ENCODE measurements at regions of chr15 and their contacts with region 1.

Region 1: DNA sequence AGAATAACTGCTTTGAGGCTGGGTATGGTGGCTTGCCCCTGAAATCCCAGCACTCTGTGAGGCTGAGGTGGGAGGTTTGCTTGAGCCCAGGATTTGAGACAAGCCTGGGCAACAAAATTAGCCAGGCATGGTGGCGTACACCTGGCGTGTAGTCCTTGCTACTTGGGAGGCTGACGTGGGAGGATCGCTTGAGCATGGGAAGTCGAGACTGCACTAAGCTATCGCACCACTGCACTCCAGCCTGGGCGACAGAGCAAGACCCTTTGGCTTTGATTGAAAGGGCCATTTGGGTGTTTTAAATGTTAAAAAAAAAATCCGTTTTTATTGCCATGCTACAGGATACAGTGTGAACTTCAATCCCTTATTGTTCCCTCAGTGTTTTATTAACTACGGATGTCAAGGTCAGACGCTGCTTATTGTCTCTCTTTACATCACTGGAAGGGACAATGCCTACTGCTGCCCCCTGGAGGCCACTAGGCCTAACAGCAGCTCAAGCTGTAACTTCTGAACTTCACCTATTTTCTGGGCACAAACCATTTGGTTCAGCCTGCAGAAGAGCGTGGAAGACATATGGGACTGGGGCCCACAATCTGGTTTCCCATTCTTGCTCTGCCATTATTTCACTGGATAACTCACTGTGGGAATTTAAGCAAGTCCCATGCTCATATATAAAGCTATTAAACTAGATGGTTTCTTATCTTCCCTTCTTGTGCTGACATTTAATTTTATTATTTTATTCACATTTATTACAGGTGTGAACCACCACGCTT is 15.3 kb upstream of the IREB2 start:
- DNase-seq: peak; percentile 45
- ATAC-seq: peak; percentile 98
- H3K4me3 ChIP-seq: no peak overlapping the region
- H3K27ac ChIP-seq: no peak overlapping the region
- H3K4me1 ChIP-seq: no peaks in the 10 kb centered on the region
- H3K27me3 ChIP-seq: peaks cover 20% of the 10 kb centered on the region
- CTCF ChIP-seq: peak; percentile 83
- POLR2A ChIP-seq: no peak
- RAD21 ChIP-seq: peak; percentile 67

Region 2: DNA sequence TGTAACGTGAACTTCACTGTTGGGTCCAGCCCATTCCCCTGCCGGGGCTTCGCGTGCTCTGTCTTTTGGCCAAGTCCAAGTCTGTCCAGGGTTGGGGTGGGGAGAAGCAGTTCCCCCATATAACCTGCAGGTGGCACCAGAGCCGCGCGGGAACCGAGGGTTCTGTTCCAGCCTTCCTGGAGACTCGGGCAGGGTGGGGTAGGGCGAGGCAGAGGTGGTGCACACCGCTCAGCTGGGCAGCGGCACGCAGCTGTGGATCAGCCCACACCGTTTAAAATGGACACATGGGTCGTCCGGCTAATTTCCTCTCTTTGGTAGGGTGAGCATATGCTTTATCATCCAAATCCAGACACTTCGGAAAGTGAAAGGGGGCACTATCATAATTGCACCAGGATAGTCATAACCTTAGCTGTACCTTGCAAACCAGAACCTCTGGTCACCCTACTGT is 463.3 kb before region 1 on chr15:
- CTCF ChIA-PET with region 1: no interaction called
- POLR2A ChIA-PET with region 1: no interaction called
- dilution Hi-C with region 1: no loop called
- in situ Hi-C with region 1: loop called (anchors 25 kb)
- intact Hi-C with region 1: loop called (anchors 5 kb)
- DNase-seq: peak; percentile 41
- ATAC-seq: peak; percentile 100
- H3K4me3 ChIP-seq: no peak overlapping the region
- H3K27ac ChIP-seq: no peak overlapping the region
- H3K4me1 ChIP-seq: no peaks in the 10 kb centered on the region
- H3K27me3 ChIP-seq: peaks cover 46% of the 10 kb centered on the region
- CTCF ChIP-seq: peak; percentile 90
- POLR2A ChIP-seq: no peak
- RAD21 ChIP-seq: peak; percentile 92

Region 3: GRCh38 chr15:78481917-78482316 is 59.2 kb after region 1 on chr15:
- CTCF ChIA-PET with region 1: no interaction called
- POLR2A ChIA-PET with region 1: no interaction called
- dilution Hi-C with region 1: no loop called
- in situ Hi-C with region 1: no loop called
- intact Hi-C with region 1: no loop called
- DNase-seq: no peak
- ATAC-seq: peak; percentile 11; the same call in 1 of the 2 replicates
- H3K4me3 ChIP-seq: no peak overlapping the region
- H3K27ac ChIP-seq: no peak overlapping the region
- H3K4me1 ChIP-seq: peaks cover 2% of the 10 kb centered on the region; the same call in 1 of the 2 replicates
- H3K27me3 ChIP-seq: no peaks in the 10 kb centered on the region
- CTCF ChIP-seq: no peak
- POLR2A ChIP-seq: no peak
- RAD21 ChIP-seq: no peak